Ascending aorta (tissue), 2 donors: ENCODE measurements at regions of chr14 and their contacts with region 1.

Region 1: DNA sequence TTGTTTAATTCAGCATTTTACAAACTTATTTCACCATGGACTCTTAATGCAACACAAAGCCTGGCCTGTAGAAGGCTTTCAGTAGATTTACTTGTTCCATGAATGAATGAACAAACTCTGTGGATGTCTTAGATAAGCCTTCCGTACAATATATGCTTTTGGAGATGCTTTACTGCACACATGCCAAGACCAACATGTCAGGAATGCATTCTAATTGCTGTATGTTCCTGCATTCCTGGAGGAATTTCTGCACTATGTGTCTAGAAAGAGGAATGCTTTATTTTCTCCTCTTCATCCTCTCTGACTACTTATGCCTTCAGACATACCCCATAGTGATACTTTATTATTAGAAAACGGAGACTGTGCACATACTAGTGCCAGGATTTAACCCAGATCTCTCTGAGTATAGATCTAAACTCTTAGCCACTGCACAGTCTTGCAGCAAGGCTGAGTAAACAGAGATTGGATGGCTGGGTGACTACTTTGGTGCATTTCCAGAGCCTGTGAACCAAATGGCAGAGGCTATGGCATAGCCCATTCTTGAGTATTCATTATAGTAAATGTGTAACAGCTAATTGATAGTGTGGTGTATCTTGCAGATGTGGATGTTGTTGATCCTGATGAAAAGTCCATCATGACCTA is 108.2 kb downstream of the SYNE2 start:
- DNase-seq: no peak
- H3K4me3 ChIP-seq: no peak overlapping the region
- H3K27ac ChIP-seq: no peak overlapping the region
- H3K4me1 ChIP-seq: no peaks in the 10 kb centered on the region
- H3K27me3 ChIP-seq: no peaks in the 10 kb centered on the region
- CTCF ChIP-seq: no peak

Region 2: GRCh38 chr14:63800651-63801375 is 160.2 kb before region 1 on chr14:
- intact Hi-C with region 1: loop called (anchors 10 kb)
- DNase-seq: no peak
- H3K4me3 ChIP-seq: no peak overlapping the region
- H3K27ac ChIP-seq: no peak overlapping the region
- H3K4me1 ChIP-seq: peaks cover 0 to 4% of the 10 kb centered on the region in 2 donors
- H3K27me3 ChIP-seq: no peaks in the 10 kb centered on the region
- CTCF ChIP-seq: no peak